Thyroid gland (tissue), 4 donors: ENCODE measurements at regions of chr4 and their contacts with region 1.

Region 1: GRCh38 chr4:10164877-10165283 is 48.3 kb upstream of the WDR1 start:
- DNase-seq: peak; percentile 28 to 48
- H3K4me3 ChIP-seq: no peak overlapping the region
- H3K27ac ChIP-seq: no peak overlapping the region
- H3K4me1 ChIP-seq: peaks cover 13 to 17% of the 10 kb centered on the region in 2 donors
- H3K27me3 ChIP-seq: no peaks in the 10 kb centered on the region
- CTCF ChIP-seq: peak in 4 of 6 experiments; percentile 36 to 59 (median 56)
- POLR2A ChIP-seq: no peak

Region 2: GRCh38 chr4:10273030-10273429 is 108.2 kb after region 1 on chr4:
- intact Hi-C with region 1: no loop called
- DNase-seq: no peak
- H3K4me3 ChIP-seq: no peak overlapping the region
- H3K27ac ChIP-seq: no peak overlapping the region
- H3K4me1 ChIP-seq: no peaks in the 10 kb centered on the region
- H3K27me3 ChIP-seq: no peaks in the 10 kb centered on the region
- CTCF ChIP-seq: no peak
- POLR2A ChIP-seq: no peak

Region 3: GRCh38 chr4:10403633-10404445 is 239.0 kb after region 1 on chr4:
- intact Hi-C with region 1: loop called (anchors 5 kb)
- DNase-seq: peak in 1 of 2 donors; percentile 21
- H3K4me3 ChIP-seq: no peak overlapping the region
- H3K27ac ChIP-seq: no peak overlapping the region
- H3K4me1 ChIP-seq: no peaks in the 10 kb centered on the region
- H3K27me3 ChIP-seq: no peaks in the 10 kb centered on the region
- CTCF ChIP-seq: peak in 4 of 6 experiments; percentile 53 to 77 (median 64)
- POLR2A ChIP-seq: no peak